ENCODE measurements at regions of chrX and their contacts with region 1.

Region 1: DNA sequence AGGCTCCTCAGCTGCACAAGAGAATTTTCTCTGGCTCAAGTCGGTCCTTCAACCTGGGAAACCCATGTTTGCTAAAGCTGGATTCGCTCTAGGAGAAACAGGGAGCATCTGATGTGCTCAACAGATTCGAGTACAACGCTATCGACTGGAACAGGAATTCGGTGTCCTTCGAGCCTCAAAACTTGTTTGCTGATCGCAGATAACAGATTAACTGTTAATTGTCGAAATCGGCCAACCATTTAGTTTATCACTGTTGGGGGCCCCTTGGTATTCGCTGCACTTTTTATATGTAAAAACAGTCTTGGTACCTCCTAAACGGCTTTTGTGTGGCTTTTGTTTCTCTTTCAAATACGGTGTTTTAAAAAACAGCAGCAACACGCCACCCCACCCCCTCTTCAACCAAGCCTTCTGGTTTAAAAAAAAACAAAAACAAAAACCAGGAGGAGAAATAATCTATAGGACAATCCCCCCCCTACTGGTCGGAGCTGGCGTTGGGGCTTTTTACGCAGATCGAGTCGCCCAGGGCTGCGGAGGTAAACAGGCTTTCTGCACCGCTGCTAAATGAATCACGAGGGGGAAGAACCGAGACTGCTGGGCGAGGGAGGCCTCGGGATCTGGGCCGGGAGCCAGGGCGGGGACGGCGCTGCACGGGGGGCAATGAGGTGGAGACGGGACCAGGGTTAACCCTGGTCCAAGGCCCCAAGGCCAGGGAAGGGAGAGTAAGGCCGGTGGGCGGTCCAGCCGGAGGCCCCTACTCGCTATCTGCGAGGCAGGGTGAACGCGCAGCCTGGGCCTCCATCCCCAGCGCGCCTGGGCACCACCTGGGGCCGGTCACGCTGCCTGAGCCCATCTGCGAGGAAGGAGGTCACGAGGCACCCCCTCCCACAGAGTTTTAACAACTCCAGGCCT is 71.7 kb upstream of the BCOR start:
- DNase-seq: peak; percentile 85
- ATAC-seq: peak; percentile 39
- H3K4me3 ChIP-seq: peak overlapping the region; percentile 63
- H3K27ac ChIP-seq: no peak overlapping the region
- H3K4me1 ChIP-seq: peaks cover 38% of the 10 kb centered on the region
- H3K27me3 ChIP-seq: no peaks in the 10 kb centered on the region
- CTCF ChIP-seq: peak; percentile 71

Region 2: DNA sequence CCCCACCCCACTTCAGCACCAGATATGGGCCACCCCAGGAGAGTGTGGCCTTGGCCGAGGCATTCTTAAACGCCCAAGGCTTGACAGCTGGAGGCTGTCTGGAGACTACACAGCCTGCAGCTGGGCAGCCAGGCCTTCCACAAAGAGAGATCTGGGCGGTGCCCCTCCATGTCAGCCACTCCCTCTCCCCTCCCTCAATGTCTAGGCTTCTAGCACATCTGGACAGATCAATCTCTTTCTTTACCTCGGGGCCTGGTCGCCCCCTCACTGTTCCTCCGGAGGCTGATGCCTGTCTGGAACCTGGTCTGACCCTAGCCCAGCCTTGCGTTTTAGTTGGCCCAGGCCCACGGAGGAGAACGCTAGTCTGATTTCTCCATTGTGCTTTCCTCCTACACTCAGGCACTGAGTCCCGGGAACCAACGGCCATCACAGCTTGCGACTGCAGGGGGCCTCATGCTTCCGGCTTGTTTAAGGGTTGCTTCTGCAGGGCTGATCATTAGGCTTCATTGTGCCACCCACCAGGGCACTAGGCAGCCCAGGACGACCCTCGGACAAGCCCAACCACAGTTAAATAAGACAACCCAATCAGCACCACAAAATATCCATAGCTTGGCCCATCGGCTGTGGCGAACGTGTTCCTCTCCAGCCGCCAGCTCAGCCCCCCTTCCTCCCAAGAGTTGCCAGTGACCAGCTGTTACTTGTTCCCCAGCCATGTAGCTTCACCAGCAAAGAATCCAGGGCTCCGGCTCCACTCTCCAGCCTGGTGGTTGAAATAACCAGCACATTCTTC is 272.3 kb before region 1 on chrX:
- CTCF ChIA-PET with region 1: no interaction called
- POLR2A ChIA-PET with region 1: no interaction called
- intact Hi-C with region 1: loop called (anchors 10 kb)
- DNase-seq: peak; percentile 72
- ATAC-seq: peak; percentile 31
- H3K4me3 ChIP-seq: no peak overlapping the region; the same call in 1 of the 2 replicates
- H3K27ac ChIP-seq: peak overlapping the region; percentile 90
- H3K4me1 ChIP-seq: peaks cover 52% of the 10 kb centered on the region
- H3K27me3 ChIP-seq: no peaks in the 10 kb centered on the region
- CTCF ChIP-seq: no peak

Region 3: DNA sequence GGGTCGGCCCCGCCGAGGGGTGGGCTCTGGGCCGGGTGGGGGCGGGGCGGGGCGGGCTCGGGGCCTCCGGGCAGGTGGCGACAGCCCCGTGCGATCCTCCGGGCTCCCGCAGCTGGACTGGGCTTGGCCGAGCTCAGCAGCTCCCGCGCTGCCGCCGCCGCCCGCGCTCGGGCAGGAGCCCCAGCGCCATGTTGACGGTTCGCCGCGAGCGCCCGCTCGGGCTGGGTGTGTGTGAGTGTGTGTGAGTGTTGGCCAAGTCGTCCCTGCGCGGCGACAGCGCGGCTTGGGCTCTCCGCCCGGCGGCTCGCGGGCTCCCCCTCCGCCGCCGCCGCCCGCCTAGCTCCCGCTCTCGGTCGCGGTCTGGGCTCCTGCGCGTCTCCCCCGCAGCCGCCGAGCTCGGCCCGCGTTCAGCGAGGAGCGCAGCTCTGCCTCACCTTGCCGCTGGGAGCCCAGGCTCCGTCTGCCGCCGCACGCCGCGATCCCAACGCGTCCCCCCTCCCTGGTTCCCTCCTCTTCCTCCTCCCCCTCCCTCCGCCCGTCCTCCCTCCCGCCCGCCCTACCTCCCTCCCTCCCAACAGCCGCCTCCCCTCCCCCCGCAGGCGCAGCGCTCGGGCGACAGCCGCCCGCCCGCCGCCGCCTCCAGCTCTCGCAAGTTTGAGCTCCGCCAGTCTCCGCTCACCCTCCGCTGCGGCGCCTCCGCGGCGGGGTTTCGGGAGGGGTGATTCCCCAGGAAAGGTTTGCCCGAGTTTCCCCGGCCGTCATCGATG is 71.8 kb before region 1 on chrX and contains the start of gene BCOR:
- CTCF ChIA-PET with region 1: no interaction called
- POLR2A ChIA-PET with region 1: no interaction called
- intact Hi-C with region 1: no loop called
- DNase-seq: peak; percentile 62
- ATAC-seq: peak; percentile 19
- H3K4me3 ChIP-seq: peak within 1 kb of the TSS; percentile 92
- H3K27ac ChIP-seq: no peak within 1 kb of the TSS
- H3K4me1 ChIP-seq: peaks cover 34% of the 10 kb centered on the region
- H3K27me3 ChIP-seq: no peaks in the 10 kb centered on the region
- CTCF ChIP-seq: no peak
- total RNA-seq, gene BCOR: 21.8 and 41.9 TPM in 2 replicates

Region 4: DNA sequence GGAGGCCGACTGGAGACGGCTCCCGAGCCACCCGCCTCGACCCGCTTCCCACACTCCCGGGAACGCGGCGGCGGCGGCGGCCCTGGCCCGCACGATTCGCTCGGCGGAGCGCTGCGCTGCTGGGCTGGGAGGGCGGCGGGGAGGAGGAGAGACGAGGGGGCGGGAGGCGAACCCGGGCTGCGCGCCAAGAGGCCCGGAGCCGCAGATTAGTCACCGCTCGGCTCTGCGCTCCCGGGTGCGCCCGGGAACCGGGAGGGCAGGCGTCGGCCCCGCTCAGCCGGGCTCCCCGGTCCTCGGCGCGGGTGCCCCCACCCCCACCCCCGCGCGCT is 60.5 kb before region 1 on chrX:
- CTCF ChIA-PET with region 1: no interaction called
- POLR2A ChIA-PET with region 1: no interaction called
- intact Hi-C with region 1: loop called (anchors 5 kb)
- DNase-seq: peak; percentile 79
- ATAC-seq: peak; percentile 32
- H3K4me3 ChIP-seq: peak overlapping the region; percentile 76
- H3K27ac ChIP-seq: peak overlapping the region; percentile 44
- H3K4me1 ChIP-seq: peaks cover 32% of the 10 kb centered on the region
- H3K27me3 ChIP-seq: no peaks in the 10 kb centered on the region
- CTCF ChIP-seq: no peak

Region 5: DNA sequence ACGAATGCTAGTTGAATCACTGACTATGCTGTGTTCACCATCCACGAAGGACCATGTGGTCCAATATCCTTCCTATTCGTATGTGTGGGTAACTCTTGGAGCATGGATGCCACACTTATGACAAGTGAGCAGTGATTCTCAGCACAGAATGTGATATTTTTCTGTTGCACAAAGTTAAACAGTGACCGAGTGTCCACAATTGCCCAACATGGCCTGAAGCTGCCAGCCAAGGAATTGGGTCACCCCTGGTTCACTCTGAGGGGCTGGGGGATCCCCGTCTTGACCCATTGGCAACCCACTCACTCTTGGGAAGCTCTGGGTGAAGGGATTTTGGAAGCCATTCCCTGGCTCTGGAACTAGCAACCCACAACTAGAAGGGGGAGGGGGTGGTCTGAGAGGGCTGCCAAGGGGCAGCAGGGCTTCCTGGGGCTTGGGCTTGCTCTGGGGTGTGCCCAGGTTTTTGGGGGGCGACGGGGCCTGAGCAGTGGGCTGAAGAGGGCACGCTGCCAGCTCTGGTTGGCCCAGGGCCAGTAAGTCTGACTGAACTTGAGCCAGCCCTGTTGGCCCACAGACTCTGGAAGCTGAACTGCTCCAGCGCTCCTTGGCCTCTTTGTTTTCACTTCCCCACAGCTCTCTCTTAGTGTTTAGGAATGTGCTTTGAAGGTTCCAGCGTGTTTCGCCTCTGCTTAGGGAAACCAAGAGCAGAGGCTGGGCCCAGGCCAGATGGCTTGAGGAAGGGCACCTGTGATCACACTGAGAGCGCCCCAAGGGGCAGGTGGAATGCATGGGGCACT is 28.5 kb before region 1 on chrX:
- CTCF ChIA-PET with region 1: no interaction called
- POLR2A ChIA-PET with region 1: no interaction called
- intact Hi-C with region 1: no loop called
- DNase-seq: no peak
- ATAC-seq: no peak
- H3K4me3 ChIP-seq: no peak overlapping the region
- H3K27ac ChIP-seq: no peak overlapping the region
- H3K4me1 ChIP-seq: peaks cover 6% of the 10 kb centered on the region; the same call in 1 of the 2 replicates
- H3K27me3 ChIP-seq: no peaks in the 10 kb centered on the region
- CTCF ChIP-seq: no peak

Region 6: DNA sequence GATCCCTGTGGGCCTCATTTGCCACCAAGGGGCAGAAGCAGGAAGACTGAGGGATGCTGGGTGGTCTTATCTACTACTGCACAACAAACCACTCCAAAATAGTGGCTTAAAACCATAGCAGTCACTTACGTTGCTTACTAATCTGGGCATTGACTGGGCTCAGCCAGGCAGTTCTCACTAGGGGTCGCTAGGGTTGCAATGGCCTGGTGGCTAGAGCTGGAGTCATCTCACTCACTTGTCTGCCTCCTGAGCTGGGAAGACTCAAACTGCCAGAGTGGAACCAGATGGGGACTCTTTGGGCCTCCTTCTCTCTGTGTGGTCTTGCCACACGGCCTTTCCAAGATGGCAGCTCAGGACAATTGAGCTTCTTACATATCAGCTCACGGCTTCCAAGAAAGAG is 144.6 kb after region 1 on chrX:
- CTCF ChIA-PET with region 1: no interaction called
- POLR2A ChIA-PET with region 1: no interaction called
- intact Hi-C with region 1: no loop called
- DNase-seq: no peak
- ATAC-seq: no peak
- H3K4me3 ChIP-seq: no peak overlapping the region
- H3K27ac ChIP-seq: no peak overlapping the region
- H3K4me1 ChIP-seq: no peaks in the 10 kb centered on the region
- H3K27me3 ChIP-seq: peaks cover 23% of the 10 kb centered on the region
- CTCF ChIP-seq: peak; percentile 23; the same call in 1 of the 2 replicates

Region 7: DNA sequence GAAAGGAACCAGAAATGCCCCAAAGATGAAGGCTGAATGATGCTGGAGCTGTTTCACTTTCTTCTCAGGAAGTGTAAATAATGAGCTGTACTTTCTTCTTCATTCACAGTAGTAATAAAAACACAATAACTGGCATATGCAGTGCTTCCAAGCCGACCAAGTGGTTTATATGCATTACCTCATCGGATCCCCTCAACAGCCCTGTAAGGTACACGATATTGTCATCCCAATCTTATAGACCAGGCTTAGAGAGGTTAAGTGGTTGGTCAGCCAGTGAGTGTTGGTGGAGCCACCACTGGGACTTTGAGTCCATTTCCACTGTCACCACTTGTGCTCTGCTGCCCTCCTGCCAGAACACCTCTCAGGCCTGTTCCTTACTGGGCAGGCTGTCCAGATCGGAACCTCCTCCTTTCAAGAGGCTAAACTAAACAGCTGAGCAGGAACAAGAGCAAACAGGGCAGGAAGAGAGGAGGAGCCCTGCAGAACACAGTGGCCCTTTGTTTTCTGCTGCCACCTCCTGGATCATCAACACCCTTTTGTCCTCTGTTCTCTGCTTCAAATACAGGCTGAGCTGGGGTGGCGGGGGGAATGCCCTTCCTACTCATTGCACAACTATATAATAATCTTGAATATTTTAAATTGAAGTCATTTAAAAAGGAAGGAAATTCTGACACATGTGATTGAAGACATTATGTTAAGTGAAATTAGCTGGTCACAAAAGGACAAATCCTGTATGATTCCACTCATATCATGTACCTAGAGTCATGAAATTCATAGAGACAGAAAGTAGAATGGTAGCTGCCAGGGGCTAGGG is 298.8 kb after region 1 on chrX:
- CTCF ChIA-PET with region 1: no interaction called
- POLR2A ChIA-PET with region 1: no interaction called
- intact Hi-C with region 1: loop called (anchors 10 kb)
- DNase-seq: peak; percentile 35
- ATAC-seq: peak; percentile 88
- H3K4me3 ChIP-seq: no peak overlapping the region
- H3K27ac ChIP-seq: no peak overlapping the region
- H3K4me1 ChIP-seq: peaks cover 6% of the 10 kb centered on the region; the same call in 1 of the 2 replicates
- H3K27me3 ChIP-seq: no peaks in the 10 kb centered on the region; the same call in 1 of the 2 replicates
- CTCF ChIP-seq: peak; percentile 51

Measured in PC-3 (cell line).